ENCODE measurements at regions of chr6 and their contacts with region 1.

Region 1: GRCh38 chr6:100573167-100573566 is 108.4 kb upstream of the SIM1 start:
- DNase-seq: peak; percentile 37
- H3K4me3 Mint-ChIP-seq: no peak overlapping the region
- H3K27ac Mint-ChIP-seq: no peak overlapping the region
- H3K4me1 Mint-ChIP-seq: no peaks in the 10 kb centered on the region
- H3K27me3 Mint-ChIP-seq: no peaks in the 10 kb centered on the region
- CTCF ChIP-seq: peak; percentile 48

Region 2: DNA sequence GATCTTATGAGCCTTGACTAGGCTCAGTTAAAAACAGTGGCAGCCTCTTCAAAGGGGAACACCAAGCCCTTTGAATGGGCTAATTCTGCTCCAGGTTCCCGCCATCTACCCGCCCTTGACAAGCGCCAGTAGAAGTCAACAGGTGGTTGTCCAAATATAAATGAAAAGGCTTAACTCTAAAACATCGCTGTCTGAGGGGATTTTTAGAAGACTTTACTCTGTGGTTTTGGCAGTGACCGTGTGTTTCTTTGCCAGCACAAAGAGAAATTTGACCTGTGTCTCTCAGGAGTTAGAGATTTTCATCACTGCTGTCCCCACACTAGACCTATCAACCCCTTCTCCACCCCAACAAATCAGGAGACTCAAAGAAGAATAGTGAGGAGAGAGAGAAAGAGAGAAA is 88.7 kb before region 1 on chr6:
- CTCF ChIA-PET with region 1: no interaction called
- intact Hi-C with region 1: loop called (anchors 2 kb)
- DNase-seq: no peak
- H3K4me3 Mint-ChIP-seq: no peak overlapping the region
- H3K27ac Mint-ChIP-seq: no peak overlapping the region
- H3K4me1 Mint-ChIP-seq: peaks cover 35% of the 10 kb centered on the region
- H3K27me3 Mint-ChIP-seq: no peaks in the 10 kb centered on the region
- CTCF ChIP-seq: no peak

Region 3: DNA sequence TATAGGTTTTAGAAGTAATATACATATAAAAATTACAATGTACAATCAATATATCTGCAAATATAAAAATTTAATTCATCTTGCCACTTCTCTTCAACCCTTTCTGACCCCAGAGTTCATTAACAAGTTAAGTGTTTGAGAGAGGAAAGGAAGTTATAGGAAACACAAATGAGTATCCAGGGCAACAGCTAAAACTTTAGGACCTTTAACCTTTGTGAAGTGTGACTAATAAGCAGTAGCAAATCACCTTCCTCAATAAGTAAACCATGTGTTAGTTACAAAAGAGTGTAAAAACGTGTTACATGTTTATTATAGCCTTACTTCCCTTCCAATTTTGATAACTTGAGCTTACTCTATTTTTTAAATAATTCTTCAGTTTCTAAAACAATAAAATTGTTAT is 35.1 kb before region 1 on chr6:
- CTCF ChIA-PET with region 1: no interaction called
- intact Hi-C with region 1: no loop called
- DNase-seq: no peak
- H3K4me3 Mint-ChIP-seq: no peak overlapping the region
- H3K27ac Mint-ChIP-seq: peak overlapping the region; percentile 75
- H3K4me1 Mint-ChIP-seq: peaks cover 26% of the 10 kb centered on the region
- H3K27me3 Mint-ChIP-seq: no peaks in the 10 kb centered on the region
- CTCF ChIP-seq: no peak

Measured in Calu3 (cell line).